Mucosa of descending colon (tissue), 3 donors: ENCODE measurements at regions of chr9 and their contacts with region 1.

Region 1: GRCh38 chr9:89602978-89603766 is 1.6 kb upstream of the GADD45G start:
- DNase-seq: peak; percentile 92 to 96 (median 95)
- ATAC-seq: peak; percentile 49
- H3K4me3 ChIP-seq: no peak overlapping the region
- H3K4me1 ChIP-seq: peaks cover 16% of the 10 kb centered on the region
- CTCF ChIP-seq: peak; percentile 75

Region 2: DNA sequence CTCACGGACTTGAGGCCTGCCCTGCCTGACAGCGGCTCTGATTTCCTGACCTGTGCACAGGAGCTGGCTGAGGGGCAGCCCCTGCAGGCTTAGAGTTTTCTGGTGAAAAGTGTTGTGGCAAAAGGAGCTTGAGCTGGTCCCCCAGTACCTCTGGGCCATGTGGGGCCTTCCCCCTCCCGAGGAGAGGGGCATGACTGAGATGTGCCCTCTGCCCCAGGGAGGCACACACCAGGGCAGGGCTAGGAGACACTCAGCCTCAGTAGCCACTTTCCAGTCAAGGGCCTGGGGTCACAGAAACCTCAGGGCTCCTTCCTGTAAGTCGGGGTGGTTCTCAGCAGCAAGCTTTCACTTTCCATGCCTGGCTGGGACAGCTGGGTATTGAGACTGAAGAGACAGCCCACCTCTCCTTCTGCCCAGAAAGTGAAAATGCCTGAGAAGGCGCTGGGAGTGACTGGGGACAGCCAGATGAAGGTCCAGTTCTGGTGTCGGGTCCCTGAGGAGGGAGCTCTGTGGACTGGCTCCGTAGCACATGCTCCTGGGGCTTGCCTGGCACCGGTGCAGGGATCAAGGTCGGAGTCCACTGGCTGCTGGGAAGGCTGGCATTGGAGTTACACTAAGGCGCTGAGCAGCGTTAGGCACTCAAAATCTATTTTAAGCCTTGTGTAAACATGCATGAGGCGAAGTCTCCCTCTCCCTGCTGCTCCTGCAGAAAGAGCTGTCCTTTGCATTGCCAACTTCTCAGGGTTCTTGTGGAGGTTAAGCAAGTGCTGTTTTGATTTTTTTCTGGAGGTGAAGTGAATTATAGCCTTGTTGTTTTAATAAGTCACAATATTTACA is 396.6 kb after region 1 on chr9:
- intact Hi-C with region 1: loop called in 1 of 2 experiments (anchors 10 kb)
- DNase-seq: peak; percentile 88
- ATAC-seq: peak; percentile 91
- H3K4me3 ChIP-seq: no peak overlapping the region
- H3K4me1 ChIP-seq: peaks cover 23% of the 10 kb centered on the region
- CTCF ChIP-seq: no peak

Region 3: DNA sequence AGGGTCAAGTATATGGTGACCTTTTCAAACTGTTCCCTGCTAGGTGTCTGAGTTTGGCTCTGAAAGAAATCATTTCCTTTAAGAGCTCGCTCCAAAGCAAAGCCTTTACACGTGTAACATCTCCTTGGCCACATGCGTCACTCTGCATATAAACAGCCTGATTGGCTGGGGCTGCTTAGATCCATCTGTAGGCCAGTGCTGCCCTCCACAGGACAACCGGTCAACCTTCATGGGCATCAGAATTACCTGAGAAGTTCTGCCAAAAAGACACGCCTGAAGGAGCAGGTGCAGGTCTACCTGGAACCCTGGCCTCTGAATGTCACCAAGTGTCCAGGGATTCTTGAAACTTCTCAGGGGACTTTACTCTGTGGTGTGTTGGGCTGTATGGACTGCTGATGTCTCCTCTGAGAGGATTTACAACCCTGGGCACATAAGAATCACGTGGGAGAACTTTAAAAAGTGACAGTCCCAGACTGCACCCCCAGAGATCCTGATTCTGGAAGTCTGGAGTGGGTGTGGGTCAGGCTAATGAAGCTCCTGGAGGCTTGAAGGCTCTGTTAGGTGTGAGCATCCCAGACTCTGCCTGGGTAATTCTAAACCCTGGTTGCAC is 499.2 kb after region 1 on chr9:
- intact Hi-C with region 1: loop called (anchors 2 kb)
- DNase-seq: peak; percentile 86 to 91 (median 86)
- ATAC-seq: peak; percentile 99
- H3K4me3 ChIP-seq: no peak overlapping the region
- H3K4me1 ChIP-seq: peaks cover 4% of the 10 kb centered on the region
- CTCF ChIP-seq: peak; percentile 56